Activated CD4-positive, alpha-beta memory T cell treated with anti-CD3 and anti-CD28 coated beads, Interleukin-2, amount 10 ng/mL, durations not matched to agents 7 days and 5 days (primary cell): ENCODE measurements at regions of chr6 and their contacts with region 1.

Region 1: GRCh38 chr6:33126101-33126714 is 50.4 kb downstream of the HLA-DPB1 start:
- DNase-seq: peak; percentile 73
- H3K4me3 Mint-ChIP-seq: no peak overlapping the region
- H3K27ac Mint-ChIP-seq: no peak overlapping the region
- H3K4me1 Mint-ChIP-seq: peaks cover 25% of the 10 kb centered on the region
- H3K27me3 Mint-ChIP-seq: peaks cover 16% of the 10 kb centered on the region

Region 2: GRCh38 chr6:33139596-33140206 is 13.5 kb after region 1 on chr6:
- CTCF ChIA-PET with region 1: interaction called, 22 read pairs
- POLR2A ChIA-PET with region 1: no interaction called
- DNase-seq: no peak
- H3K4me3 Mint-ChIP-seq: no peak overlapping the region
- H3K27ac Mint-ChIP-seq: no peak overlapping the region
- H3K4me1 Mint-ChIP-seq: peaks cover 6% of the 10 kb centered on the region
- H3K27me3 Mint-ChIP-seq: peaks cover 50% of the 10 kb centered on the region

Region 3: GRCh38 chr6:33147807-33148666 is 21.8 kb after region 1 on chr6:
- CTCF ChIA-PET with region 1: interaction called, 36 read pairs
- POLR2A ChIA-PET with region 1: interaction called, 3 read pairs
- DNase-seq: no peak
- H3K4me3 Mint-ChIP-seq: no peak overlapping the region
- H3K27ac Mint-ChIP-seq: no peak overlapping the region
- H3K4me1 Mint-ChIP-seq: peaks cover 3% of the 10 kb centered on the region
- H3K27me3 Mint-ChIP-seq: peaks cover 40% of the 10 kb centered on the region

Region 4: DNA sequence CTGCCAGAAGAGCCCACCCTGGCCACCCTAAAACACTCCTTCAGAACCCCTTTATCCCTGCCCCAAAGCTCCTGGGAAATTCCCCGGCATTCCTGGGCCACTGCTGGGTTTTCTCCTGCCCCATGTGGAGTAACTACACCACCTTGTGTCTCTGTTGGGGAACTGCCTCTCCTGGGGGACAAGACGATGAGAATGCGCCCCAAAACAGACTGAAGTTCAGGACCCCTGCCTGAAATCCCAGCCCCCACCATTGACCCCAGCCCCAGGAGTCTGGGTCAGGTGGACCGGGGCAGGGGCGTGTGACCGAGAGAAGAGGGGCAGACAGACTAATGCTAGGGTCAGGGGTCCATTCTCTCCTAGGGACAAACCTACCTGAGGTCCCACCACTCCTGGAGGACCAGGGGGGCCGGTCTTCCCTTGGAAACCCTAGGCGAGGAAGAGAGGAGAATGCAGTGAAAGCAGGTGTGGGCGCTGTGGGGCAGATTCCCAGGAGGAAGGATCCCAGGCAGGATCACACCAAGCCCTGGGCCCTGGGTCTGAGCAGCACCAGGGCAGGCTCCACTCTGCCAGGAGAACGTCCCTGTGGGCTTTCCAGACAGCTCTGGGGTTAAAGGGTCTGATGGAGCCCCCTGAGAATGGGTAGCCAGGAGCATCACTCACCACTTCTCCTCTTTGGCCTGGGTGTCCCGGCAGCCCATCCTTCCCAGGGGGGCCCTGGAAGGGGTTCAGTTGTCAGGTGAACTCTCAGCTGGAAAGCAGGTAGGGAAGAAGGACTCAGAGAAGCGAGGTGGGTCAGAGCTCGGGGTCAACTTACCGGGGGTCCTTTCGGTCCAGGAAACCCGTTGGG is 46.7 kb after region 1 on chr6:
- CTCF ChIA-PET with region 1: no interaction called
- POLR2A ChIA-PET with region 1: no interaction called
- DNase-seq: no peak
- H3K4me3 Mint-ChIP-seq: no peak overlapping the region
- H3K27ac Mint-ChIP-seq: no peak overlapping the region
- H3K4me1 Mint-ChIP-seq: no peaks in the 10 kb centered on the region
- H3K27me3 Mint-ChIP-seq: peaks cover 2% of the 10 kb centered on the region